ENCODE measurements at regions of chr11 and their contacts with region 1.

Region 1: GRCh38 chr11:65524741-65525545 is at the start of gene SCYL1:
- ATAC-seq: peak; percentile 61 to 78 (median 72)
- H3K4me3 ChIP-seq: peak within 1 kb of the TSS; percentile 79 to 100 (median 97)
- H3K27ac ChIP-seq: peak within 1 kb of the TSS; percentile 64 to 89
- H3K4me1 ChIP-seq: peaks cover 19 to 24% of the 10 kb centered on the region in 2 donors
- total RNA-seq, gene SCYL1: 39.2 to 119 (median 57.7) TPM

Region 2: GRCh38 chr11:64990222-64990923 is 534.6 kb before region 1 on chr11:
- in situ Hi-C with region 1: no loop called
- ATAC-seq: peak; percentile 84 to 96 (median 90)
- H3K4me3 ChIP-seq: no peak overlapping the region
- H3K27ac ChIP-seq: peak overlapping the region; percentile 68 to 71
- H3K4me1 ChIP-seq: peaks cover 14% of the 10 kb centered on the region in 2 donors

Region 3: DNA sequence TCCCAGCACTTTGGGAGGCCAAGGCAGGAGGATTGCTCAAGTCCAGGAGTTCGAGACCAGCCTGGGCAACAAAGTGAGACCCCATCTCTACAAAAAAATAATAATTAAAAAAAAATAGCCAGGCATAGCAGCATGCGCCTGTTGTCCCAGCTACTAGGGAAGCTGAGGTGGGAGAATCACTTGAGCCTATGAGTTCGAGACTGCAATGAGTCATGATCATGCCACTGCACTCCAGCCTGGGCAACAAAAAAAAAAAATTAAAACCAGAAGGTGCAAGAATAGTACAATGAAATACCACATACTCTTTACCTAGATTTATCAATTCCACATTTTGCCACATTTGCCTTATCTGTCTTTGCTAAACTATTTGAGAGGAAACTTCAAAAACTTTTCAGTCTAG is 183.1 kb before region 1 on chr11:
- in situ Hi-C with region 1: no loop called
- ATAC-seq: no peak
- H3K4me3 ChIP-seq: no peak overlapping the region
- H3K27ac ChIP-seq: no peak overlapping the region
- H3K4me1 ChIP-seq: no peaks in the 10 kb centered on the region

Region 4: GRCh38 chr11:65354265-65355012 is 170.5 kb before region 1 on chr11 and contains the start of gene TIGD3:
- in situ Hi-C with region 1: loop called in 1 of 9 experiments (anchors 25 kb)
- ATAC-seq: peak; percentile 86 to 97 (median 90)
- H3K4me3 ChIP-seq: peak within 1 kb of the TSS; percentile 56 to 92 (median 64)
- H3K27ac ChIP-seq: peak within 1 kb of the TSS; percentile 84 to 86
- H3K4me1 ChIP-seq: peaks cover 17% of the 10 kb centered on the region in 2 donors
- total RNA-seq, gene TIGD3: 0.28 to 5.8 (median 4.2) TPM in 7 of 8 experiments, not detected in the other

Region 5: DNA sequence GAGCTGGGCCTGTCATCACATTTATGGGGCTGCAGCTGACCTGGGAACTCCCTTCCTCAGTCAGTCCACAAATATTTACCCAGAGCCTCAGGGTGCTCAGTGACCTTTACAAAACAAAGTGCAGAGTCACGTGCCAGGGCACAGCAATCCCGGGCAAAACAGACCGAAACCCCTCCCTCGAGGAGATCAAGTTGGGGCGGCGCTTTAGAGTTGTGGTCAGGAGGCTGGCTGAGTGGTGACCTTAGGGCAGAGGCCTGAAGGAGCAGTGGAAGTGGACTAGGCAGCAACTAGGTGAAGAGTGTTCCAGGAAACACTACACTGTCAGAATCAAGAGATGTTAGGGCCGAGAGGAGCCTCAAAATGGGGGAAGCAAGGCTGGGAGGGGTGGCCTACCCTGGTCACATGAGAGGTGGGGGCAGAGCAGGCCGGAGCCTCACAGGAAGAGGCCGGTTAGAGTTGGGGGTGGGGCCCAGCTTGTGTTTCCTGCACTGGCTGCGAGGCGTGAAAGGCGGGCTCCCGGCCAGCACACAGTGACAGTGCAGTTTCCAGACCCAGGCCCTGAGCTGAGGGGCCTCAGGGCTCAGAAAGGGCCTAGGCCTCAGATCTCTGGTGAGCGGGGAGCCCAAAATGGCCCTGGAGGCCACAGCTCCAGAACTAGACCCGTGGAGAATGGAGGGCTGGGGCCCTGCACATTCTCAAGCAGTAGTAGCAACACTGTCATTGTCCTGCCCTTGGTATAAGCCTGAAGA is 106.1 kb before region 1 on chr11:
- in situ Hi-C with region 1: loop called in 3 of 9 experiments (anchors 25 kb)
- ATAC-seq: peak; percentile 10 to 62 (median 54)
- H3K4me3 ChIP-seq: peak overlapping the region; percentile 9 to 32 (median 24)
- H3K27ac ChIP-seq: peak overlapping the region; percentile 94 to 97
- H3K4me1 ChIP-seq: peaks cover 45 to 61% of the 10 kb centered on the region in 2 donors